B cell (primary cell): ENCODE measurements at regions of chr11 and their contacts with region 1.

Region 1: DNA sequence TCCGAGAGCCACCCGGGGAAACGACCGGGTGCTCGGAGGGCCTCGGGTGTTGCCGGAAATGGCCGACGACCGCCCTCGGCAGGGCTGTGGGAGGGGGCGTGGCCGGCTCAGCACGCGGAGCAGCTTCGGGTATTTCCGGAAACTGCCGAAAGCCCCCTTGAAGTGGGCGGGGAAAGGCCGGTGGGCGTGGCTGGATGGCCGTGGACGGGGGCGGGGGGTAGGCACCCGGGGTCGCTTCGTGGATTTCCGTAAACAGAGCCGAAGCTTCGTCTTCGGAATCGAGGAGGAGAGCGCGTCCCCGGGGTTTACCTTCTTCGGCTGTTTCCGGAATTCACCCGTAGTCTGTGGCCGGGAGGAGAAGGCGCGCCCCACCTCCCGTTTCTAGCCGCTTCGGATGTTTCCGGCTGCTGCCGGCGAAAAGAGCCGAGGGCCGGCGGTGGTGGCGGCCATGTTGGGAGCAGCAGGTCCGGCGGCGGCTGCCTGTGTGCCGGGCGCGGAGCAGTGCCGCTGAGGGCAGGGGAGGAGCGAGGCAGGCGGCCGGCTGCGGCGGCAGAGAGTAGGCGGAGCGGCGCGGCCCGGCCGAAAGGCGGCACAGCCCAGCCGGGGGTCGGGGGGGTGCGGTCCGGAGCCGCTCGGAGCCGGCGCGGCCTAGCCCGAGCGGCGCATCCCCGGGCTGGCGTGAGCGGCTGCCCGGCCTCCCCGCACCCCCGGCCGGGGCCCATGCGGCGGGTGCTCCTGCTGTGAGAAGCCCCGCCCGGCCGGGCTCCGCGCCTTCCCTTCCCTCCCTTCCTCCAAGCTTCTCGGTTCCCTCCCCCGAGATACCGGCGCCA is at the start of gene MARK2:
- DNase-seq: peak; percentile 100
- ATAC-seq: peak; percentile 82
- H3K4me3 ChIP-seq: peak within 1 kb of the TSS; percentile 67 to 94 (median 90)
- H3K4me3 Mint-ChIP-seq: peak within 1 kb of the TSS; percentile 91
- H3K27ac ChIP-seq: peak within 1 kb of the TSS; percentile 82 to 91
- H3K27ac Mint-ChIP-seq: peak within 1 kb of the TSS; percentile 94
- H3K4me1 ChIP-seq: peaks cover 38 to 46% of the 10 kb centered on the region in 2 donors
- H3K4me1 Mint-ChIP-seq: peaks cover 59% of the 10 kb centered on the region
- H3K27me3 ChIP-seq: no peaks in the 10 kb centered on the region
- H3K27me3 Mint-ChIP-seq: no peaks in the 10 kb centered on the region
- CTCF ChIP-seq: no peak
- total RNA-seq, gene MARK2: 55.9 and 58.1 TPM in 2 replicates

Region 2: GRCh38 chr11:63813035-63813562 is 25.8 kb before region 1 on chr11 and contains the start of gene SPINDOC:
- CTCF ChIA-PET with region 1: interaction called, 13 read pairs
- POLR2A ChIA-PET with region 1: interaction called, 3 read pairs
- intact Hi-C with region 1: loop called (anchors 1 kb)
- DNase-seq: peak; percentile 76
- ATAC-seq: peak; percentile 95
- H3K4me3 ChIP-seq: peak within 1 kb of the TSS; percentile 34 to 91 (median 83)
- H3K4me3 Mint-ChIP-seq: peak within 1 kb of the TSS; percentile 86
- H3K27ac ChIP-seq: peak within 1 kb of the TSS in 1 of 2 donors; percentile 59
- H3K27ac Mint-ChIP-seq: peak within 1 kb of the TSS; percentile 41
- H3K4me1 ChIP-seq: peaks cover 13 to 18% of the 10 kb centered on the region in 2 donors
- H3K4me1 Mint-ChIP-seq: peaks cover 22% of the 10 kb centered on the region
- H3K27me3 ChIP-seq: no peaks in the 10 kb centered on the region
- H3K27me3 Mint-ChIP-seq: no peaks in the 10 kb centered on the region
- CTCF ChIP-seq: no peak
- total RNA-seq, gene SPINDOC: 23.9 and 27.5 TPM in 2 replicates

Region 3: GRCh38 chr11:63916837-63917691 is 78.2 kb after region 1 on chr11 and contains the start of gene RCOR2:
- CTCF ChIA-PET with region 1: interaction called, 48 read pairs
- POLR2A ChIA-PET with region 1: no interaction called
- intact Hi-C with region 1: loop called (anchors 1 kb)
- DNase-seq: peak; percentile 77
- ATAC-seq: peak; percentile 71
- H3K4me3 ChIP-seq: peak within 1 kb of the TSS in 4 of 5 experiments; percentile 35 to 58 (median 51)
- H3K4me3 Mint-ChIP-seq: peak within 1 kb of the TSS; percentile 85
- H3K27ac ChIP-seq: no peak within 1 kb of the TSS
- H3K27ac Mint-ChIP-seq: peak within 1 kb of the TSS; percentile 65
- H3K4me1 ChIP-seq: peaks cover 33% of the 10 kb centered on the region in 2 donors
- H3K4me1 Mint-ChIP-seq: peaks cover 23% of the 10 kb centered on the region
- H3K27me3 ChIP-seq: peaks cover 0 to 28% (median 9%) of the 10 kb centered on the region in 4 experiments
- H3K27me3 Mint-ChIP-seq: peaks cover 6% of the 10 kb centered on the region
- CTCF ChIP-seq: no peak
- total RNA-seq, gene RCOR2: not detected in 2 replicates

Region 4: GRCh38 chr11:63958008-63958407 is 119.1 kb after region 1 on chr11:
- CTCF ChIA-PET with region 1: interaction called, 10 read pairs
- POLR2A ChIA-PET with region 1: no interaction called
- intact Hi-C with region 1: no loop called
- DNase-seq: no peak
- ATAC-seq: no peak
- H3K4me3 ChIP-seq: no peak overlapping the region
- H3K4me3 Mint-ChIP-seq: no peak overlapping the region
- H3K27ac ChIP-seq: no peak overlapping the region
- H3K27ac Mint-ChIP-seq: no peak overlapping the region
- H3K4me1 ChIP-seq: no peaks in the 10 kb centered on the region
- H3K4me1 Mint-ChIP-seq: peaks cover 2% of the 10 kb centered on the region
- H3K27me3 ChIP-seq: no peaks in the 10 kb centered on the region
- H3K27me3 Mint-ChIP-seq: no peaks in the 10 kb centered on the region
- CTCF ChIP-seq: no peak

Region 5: GRCh38 chr11:64000026-64000739 is 161.3 kb after region 1 on chr11:
- CTCF ChIA-PET with region 1: interaction called, 17 read pairs
- POLR2A ChIA-PET with region 1: no interaction called
- intact Hi-C with region 1: no loop called
- DNase-seq: peak; percentile 84
- ATAC-seq: peak; percentile 75
- H3K4me3 ChIP-seq: peak overlapping the region in 4 of 5 experiments; percentile 23 to 58 (median 48)
- H3K4me3 Mint-ChIP-seq: peak overlapping the region; percentile 71
- H3K27ac ChIP-seq: no peak overlapping the region
- H3K27ac Mint-ChIP-seq: no peak overlapping the region
- H3K4me1 ChIP-seq: peaks cover 21 to 26% of the 10 kb centered on the region in 2 donors
- H3K4me1 Mint-ChIP-seq: peaks cover 13% of the 10 kb centered on the region
- H3K27me3 ChIP-seq: peaks cover 0 to 10% (median 3%) of the 10 kb centered on the region in 4 experiments
- H3K27me3 Mint-ChIP-seq: peaks cover 4% of the 10 kb centered on the region
- CTCF ChIP-seq: peak; percentile 92

Region 6: DNA sequence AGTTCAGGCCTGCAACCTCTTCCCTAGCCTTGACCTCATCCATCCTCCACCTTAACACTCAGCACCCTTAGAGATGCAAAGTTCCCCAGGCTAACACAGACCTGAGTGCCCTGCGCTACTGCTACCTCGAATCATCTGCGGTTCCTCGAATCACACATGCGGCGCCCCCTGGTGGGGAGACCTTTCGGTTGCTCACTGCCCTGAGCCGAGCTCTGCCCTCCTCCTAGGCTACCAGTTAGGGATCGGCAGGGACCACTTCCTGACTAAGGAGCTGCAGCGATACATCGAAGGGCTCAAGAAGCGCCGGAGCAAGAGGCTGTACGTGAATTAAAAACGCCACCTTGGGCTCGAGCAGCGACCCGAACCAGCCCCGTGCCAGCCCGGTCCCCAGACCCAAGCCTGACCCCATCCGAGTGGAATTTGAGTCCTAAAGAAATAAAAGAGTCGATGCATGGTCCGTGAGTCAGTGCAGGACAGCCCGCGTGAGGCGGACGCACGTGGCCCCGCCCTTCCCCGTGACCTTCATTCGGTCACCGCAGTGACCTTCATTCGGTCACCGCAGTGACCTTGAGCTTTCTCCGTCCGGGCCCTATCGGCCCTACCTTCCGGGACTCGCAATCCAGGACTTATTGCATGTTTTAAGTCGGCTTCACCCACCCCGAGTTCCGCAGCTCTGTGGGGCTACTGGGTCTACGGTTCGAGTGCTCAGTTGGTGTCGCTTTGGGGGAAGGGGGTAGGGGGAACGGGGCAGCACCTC is 465.6 kb after region 1 on chr11:
- CTCF ChIA-PET with region 1: interaction called, 6 read pairs
- POLR2A ChIA-PET with region 1: no interaction called
- intact Hi-C with region 1: loop called (anchors 10 kb)
- DNase-seq: peak; percentile 92
- ATAC-seq: peak; percentile 13
- H3K4me3 ChIP-seq: peak overlapping the region; percentile 78 to 88 (median 85)
- H3K4me3 Mint-ChIP-seq: peak overlapping the region; percentile 90
- H3K27ac ChIP-seq: peak overlapping the region; percentile 93 to 94
- H3K27ac Mint-ChIP-seq: peak overlapping the region; percentile 89
- H3K4me1 ChIP-seq: peaks cover 26 to 47% of the 10 kb centered on the region in 2 donors
- H3K4me1 Mint-ChIP-seq: peaks cover 36% of the 10 kb centered on the region
- H3K27me3 ChIP-seq: peaks cover 0 to 32% (median 13%) of the 10 kb centered on the region in 4 experiments
- H3K27me3 Mint-ChIP-seq: peaks cover 13% of the 10 kb centered on the region
- CTCF ChIP-seq: peak; percentile 89